Activated T-helper 1 cell treated with anti-CD3 and anti-CD28 coated beads, Interleukin-12 subunit alpha, Interleukin-12 subunit beta, Interleukin-2, Interleukin-4 antibody, amounts not matched to agents 30 ng/mL and 10 ng/mL and 1 ng/mL, durations not matched to agents 14 hours and 24 hours and 36 hours (primary cell): ENCODE measurements at regions of chr6 and their contacts with region 1.

Region 1: DNA sequence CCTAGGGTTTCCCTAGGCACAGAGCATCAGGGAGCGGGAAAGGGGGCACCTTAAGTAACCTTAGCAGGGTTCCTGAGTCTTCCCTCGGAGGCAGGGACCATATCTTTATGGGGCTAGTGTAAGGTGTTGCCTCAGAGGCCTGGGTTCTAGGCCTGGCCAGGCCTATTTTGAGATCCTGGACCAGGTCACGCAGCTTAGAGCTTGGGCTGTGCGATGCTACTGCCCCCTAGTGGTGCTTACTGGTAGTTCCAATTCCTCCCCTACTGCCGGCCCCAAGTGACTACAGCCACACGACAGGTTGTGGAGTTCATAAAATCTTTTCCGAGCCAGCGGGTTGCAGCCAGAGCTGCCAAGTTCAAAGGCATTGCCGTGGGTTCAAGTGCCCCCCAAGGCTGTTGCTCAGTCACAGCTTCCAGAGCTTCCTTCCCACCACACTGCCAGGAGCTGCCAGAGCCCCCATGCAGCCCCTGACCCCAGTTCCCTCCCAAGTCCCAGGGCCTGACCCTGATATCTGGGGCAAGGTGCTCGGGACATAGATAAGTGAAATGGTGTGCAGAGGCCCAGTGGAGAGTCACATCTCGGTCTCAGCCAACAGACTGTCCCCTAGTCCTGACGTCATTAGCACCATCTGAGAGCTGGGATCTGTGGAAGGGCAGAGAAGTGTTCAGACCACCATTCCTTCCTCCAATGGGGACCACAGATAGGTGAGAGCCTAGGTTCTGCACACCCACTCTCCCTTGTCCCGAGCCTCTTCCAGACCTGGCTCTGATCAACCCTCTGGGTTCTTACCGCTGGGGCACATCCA is 3.3 kb downstream of the LRRC73 start:
- DNase-seq: peak; percentile 74
- H3K4me3 Mint-ChIP-seq: no peak overlapping the region
- H3K27ac Mint-ChIP-seq: no peak overlapping the region
- H3K4me1 Mint-ChIP-seq: peaks cover 13% of the 10 kb centered on the region
- H3K27me3 Mint-ChIP-seq: peaks cover 18% of the 10 kb centered on the region

Region 2: DNA sequence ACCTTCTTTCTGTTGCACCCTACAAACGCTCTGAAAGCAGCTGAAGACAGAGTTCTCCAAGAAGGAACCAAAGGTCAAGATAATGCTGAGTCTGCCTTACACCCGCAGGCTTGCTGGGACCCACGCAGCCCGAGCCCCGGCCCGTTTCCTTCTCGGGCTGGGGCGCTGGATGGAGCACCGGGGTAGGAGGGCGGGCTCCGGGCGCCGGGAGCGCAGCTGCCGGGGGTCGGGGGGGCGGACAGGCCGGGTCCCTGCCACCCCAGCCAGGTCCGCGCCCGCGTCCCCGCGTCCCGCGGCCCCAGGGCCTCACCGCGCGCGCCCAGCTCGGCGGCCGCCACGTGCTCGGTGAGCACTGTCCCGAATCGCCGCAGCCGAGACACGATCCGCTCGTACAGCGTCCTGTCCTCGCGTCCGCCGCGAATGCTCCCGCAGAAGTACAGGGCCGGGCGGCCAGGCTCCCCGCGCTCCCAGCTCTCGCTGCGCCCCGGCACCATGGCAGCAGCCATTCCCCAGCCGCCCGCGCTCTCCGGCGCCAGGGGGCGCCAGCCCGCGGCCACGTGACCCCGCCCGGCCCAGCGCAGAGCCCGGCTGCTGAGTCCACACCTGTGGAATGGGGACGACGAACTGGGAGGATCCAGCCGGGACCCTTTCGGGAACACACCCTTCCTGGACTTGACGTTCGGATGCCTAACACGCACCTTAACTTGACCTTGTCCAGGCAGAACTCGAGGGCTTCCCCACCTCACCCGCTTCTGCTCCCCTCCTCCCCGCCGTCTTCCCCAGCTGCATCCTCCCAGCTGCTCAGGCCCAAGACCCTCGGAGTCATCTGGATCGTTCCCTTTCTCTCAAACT is 277.7 kb before region 1 on chr6 and contains the start of gene DNPH1:
- intact Hi-C with region 1: loop called (anchors 5 kb)
- DNase-seq: peak; percentile 78
- H3K4me3 Mint-ChIP-seq: peak within 1 kb of the TSS; percentile 92
- H3K27ac Mint-ChIP-seq: peak within 1 kb of the TSS; percentile 89
- H3K4me1 Mint-ChIP-seq: peaks cover 47% of the 10 kb centered on the region
- H3K27me3 Mint-ChIP-seq: peaks cover 22% of the 10 kb centered on the region
- total RNA-seq, gene DNPH1: 65.8 and 71.6 TPM in 2 replicates

Region 3: DNA sequence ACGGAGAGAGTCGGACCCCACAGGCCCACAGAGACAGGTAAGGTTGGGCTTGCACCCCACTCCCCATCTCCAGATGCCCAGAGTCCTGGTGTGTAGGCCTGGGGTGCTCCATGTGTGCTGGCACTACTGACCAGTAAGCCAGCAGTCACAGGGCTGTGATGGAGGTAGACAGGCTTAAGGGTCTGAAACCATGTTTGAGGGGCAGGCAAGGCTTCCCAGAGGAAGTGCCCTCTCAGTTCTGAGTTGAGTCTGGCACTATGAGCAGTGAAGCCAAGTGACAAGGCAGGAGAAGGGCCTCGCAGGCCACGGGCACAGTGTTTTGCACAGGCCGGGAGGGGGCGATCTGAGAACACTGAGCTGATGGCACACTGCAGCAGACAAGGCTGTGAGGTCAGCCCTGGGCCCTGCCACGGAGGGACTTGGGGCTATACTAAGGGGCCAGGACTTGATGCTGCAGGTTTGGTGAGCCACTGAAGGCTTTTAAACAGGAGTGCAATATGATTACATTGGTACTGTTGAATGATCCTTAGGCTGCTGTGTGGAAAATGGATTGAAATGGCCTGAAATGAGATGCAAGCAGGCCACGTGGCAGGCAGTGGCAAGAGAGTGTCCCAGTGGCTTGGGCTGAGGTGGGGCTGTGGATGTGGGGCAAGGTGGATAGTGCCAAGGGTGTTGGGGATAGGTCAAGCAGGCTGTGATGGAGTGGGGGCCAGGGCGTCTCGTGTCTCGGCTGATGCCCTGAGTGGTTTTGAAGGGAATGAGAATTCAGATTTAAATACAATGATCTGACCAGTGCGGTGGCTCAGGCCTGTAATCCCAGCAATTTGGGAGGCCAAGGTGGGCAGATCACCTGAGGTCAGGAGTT is 243.3 kb before region 1 on chr6:
- intact Hi-C with region 1: loop called (anchors 1 kb)
- DNase-seq: peak; percentile 67
- H3K4me3 Mint-ChIP-seq: no peak overlapping the region
- H3K27ac Mint-ChIP-seq: no peak overlapping the region
- H3K4me1 Mint-ChIP-seq: peaks cover 5% of the 10 kb centered on the region
- H3K27me3 Mint-ChIP-seq: peaks cover 23% of the 10 kb centered on the region

Region 4: DNA sequence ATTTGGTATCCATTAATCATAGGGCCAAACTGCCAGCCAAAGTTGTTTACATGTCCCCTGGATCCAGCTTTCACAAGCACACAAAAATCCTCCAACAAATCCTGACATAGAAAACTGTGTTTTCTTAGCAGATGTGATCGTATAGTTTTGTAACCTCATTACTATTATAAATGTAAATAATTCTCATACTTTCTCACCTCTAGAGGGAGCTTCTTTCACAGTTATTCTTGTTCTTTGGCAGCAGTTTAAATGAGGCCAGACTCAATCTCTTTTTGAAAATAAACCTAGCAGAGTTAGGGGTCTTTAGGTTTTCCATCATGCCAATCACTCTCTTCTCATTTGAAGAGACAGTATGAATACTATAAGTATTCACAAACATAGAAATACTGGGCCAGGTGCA is 120.4 kb before region 1 on chr6:
- intact Hi-C with region 1: loop called (anchors 1 kb)
- DNase-seq: no peak
- H3K4me3 Mint-ChIP-seq: no peak overlapping the region
- H3K27ac Mint-ChIP-seq: no peak overlapping the region
- H3K4me1 Mint-ChIP-seq: peaks cover 56% of the 10 kb centered on the region
- H3K27me3 Mint-ChIP-seq: peaks cover 43% of the 10 kb centered on the region

Region 5: GRCh38 chr6:43402820-43403219 is 104.0 kb before region 1 on chr6:
- intact Hi-C with region 1: no loop called
- DNase-seq: no peak
- H3K4me3 Mint-ChIP-seq: no peak overlapping the region
- H3K27ac Mint-ChIP-seq: no peak overlapping the region
- H3K4me1 Mint-ChIP-seq: no peaks in the 10 kb centered on the region
- H3K27me3 Mint-ChIP-seq: peaks cover 37% of the 10 kb centered on the region

Region 6: GRCh38 chr6:43454696-43455530 is 52.0 kb before region 1 on chr6:
- intact Hi-C with region 1: loop called (anchors 1 kb)
- DNase-seq: peak; percentile 60
- H3K4me3 Mint-ChIP-seq: peak overlapping the region; percentile 74
- H3K27ac Mint-ChIP-seq: peak overlapping the region; percentile 34
- H3K4me1 Mint-ChIP-seq: peaks cover 11% of the 10 kb centered on the region
- H3K27me3 Mint-ChIP-seq: peaks cover 30% of the 10 kb centered on the region